Adrenal gland (tissue), 19 donors: ENCODE measurements at regions of chr20 and their contacts with region 1.

Region 1: DNA sequence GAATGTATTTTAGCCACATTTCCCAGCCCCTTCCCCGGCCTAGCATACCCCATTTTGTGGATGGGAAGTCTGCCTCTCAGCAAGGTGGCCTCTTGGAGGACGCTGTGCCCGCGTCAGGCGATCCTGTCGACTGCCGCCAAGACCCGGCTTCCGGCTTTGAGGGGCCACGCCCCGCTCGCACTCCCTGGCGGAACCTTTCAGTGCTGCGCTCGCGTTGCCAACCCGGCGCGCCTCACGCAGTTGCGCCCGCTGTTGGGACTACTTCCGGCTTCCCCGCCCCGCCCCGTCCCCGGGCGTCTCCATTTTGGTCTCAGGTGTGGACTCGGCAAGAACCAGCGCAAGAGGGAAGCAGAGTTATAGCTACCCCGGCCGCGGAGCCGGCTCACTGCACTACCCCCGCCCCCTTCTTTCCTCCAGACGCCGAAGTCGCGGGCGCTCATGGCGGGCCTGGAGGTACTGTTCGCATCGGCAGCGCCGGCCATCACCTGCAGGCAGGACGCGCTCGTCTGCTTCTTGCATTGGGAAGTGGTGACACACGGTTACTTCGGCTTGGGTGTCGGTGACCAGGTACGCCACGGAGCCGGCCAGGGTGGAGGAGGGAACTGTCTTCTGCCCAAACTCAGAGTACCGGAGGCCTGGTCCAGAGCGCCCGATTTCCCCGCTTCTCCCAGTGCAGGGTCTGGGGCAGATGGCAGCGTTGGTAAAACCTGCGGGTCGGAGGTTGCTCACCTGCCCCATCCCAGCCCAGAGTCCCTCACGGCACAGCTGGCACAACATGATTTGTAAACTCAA is at the start of gene PSMF1:
- DNase-seq: peak; percentile 92 to 97 (median 95)
- H3K4me3 ChIP-seq: peak within 1 kb of the TSS; percentile 13 to 95 (median 84)
- H3K27ac ChIP-seq: peak within 1 kb of the TSS in 4 of 5 donors; percentile 14 to 82 (median 70)
- H3K4me1 ChIP-seq: peaks cover 36 to 52% of the 10 kb centered on the region in 2 donors
- H3K27me3 ChIP-seq: no peaks in the 10 kb centered on the region
- CTCF ChIP-seq: peak in 2 of 6 experiments; percentile 32 to 37
- POLR2A ChIP-seq: peak in 1 of 2 donors; percentile 49
- total RNA-seq, gene PSMF1: 38.0 to 363 (median 126) TPM

Region 2: DNA sequence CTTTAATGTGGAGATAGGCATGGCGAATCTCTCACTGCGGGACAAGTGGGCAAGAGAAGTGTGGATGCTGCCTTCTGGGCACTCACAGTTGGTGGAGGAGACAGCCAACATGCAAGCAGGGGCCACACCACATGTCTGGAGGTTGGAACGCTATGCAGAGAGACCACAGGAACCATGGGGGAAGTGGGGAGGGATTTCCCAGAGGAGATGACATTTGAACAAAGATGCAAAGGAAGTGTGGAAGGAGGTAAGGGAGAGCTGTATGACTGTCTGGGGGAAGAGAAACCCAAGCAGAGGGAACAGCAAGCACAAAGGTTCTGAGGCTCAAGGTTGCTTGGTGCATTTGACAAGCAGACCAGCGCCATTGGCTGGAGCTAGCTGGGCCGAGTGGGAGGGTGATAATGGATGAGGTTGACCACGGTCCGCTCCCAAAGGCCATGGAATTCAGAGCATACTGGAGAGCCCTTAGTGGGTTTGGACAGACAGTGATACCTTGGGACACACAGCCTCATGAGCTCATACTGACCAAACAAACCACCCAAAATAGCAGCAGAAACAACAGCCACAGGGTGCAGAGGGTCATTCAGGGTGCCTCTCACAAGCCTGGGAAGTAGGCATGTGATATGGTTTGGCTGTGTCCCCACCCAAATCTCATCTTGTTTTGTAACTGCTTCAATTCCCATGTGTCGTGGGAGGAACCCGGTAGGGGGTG is 292.7 kb before region 1 on chr20:
- intact Hi-C with region 1: loop called in 1 of 2 experiments (anchors 10 kb)
- DNase-seq: peak in 2 of 7 donors; percentile 6 to 17
- H3K4me3 ChIP-seq: no peak overlapping the region
- H3K27ac ChIP-seq: no peak overlapping the region
- H3K4me1 ChIP-seq: no peaks in the 10 kb centered on the region
- H3K27me3 ChIP-seq: no peaks in the 10 kb centered on the region
- CTCF ChIP-seq: no peak
- POLR2A ChIP-seq: no peak